PC-3 (cell line): ENCODE measurements at regions of chr11 and their contacts with region 1.

Region 1: DNA sequence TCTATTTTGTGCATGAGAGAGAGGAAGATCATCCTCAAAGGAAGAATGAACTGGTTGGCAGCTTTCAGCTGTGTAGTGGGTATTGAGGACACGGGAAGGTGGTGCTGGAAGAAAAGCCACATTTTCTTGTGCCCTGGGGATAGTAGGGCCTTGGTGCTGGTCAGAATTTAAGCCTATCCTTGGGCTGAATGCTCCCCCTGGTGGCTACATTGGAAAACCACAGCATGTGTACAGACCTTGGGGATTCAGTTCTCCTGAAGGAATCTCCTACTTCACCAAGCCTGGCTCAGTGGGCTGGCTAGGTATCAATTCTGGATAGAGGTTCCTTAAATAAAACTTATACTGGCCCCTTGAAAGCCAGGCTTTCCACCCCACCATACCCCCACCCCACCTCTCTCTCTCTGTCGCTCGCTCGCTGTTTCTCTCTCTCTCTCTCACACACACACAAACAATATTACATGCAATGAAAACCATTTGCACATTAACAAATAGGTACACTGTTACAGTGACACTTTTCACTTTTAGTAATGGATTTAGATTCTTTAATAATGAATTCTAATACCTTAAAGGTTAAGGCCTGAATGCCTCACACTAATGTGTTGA is 2.8 kb upstream of the OR51M1 start:
- DNase-seq: peak; percentile 65
- ATAC-seq: peak; percentile 89
- H3K4me3 ChIP-seq: no peak overlapping the region
- H3K27ac ChIP-seq: no peak overlapping the region
- H3K4me1 ChIP-seq: no peaks in the 10 kb centered on the region
- H3K27me3 ChIP-seq: no peaks in the 10 kb centered on the region
- CTCF ChIP-seq: peak; percentile 78

Region 2: DNA sequence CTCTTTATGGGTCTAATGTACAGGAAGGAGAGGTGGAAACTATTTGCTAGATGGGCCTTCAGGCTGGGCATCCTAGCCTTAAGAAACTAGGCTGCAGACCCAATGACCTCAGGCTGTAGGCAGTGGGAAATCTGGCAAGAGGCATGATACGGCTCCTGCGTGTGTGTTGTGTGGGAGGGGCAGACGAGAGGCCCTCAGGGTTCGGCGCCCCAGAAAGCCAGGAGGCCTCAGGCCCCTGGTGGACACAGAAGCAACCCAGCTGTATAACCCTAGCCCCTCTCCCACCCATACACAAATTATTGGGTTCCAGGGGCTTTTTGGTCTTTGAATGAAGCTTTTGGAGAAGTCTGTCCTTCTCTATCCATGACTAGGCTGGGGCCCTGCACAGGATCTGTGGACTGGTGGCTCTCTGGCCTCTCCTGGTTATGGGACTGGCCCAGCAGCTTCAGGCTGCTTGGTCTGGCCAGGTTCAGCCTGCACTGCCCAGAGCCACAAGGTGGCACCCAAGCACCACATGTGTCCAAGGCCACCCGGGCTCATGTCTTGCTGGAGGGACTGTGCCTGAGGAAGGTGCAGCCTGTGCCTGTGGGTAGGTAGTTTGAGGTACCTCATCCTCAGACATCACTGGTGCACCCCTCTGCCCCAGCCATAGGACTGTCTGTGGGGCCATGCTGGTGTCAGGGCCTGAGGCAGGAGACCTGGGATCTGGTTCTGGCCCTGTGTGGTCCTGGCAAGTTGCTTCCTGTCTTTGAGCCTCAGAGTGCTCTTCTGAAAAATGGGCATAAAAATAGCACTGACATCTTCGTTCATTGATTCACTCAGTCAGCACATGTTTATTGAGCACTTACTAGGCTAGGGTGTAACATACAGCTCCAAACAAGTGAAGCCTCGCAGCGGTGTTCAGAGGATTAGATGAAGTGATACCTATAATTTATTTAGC is 1198.8 kb before region 1 on chr11:
- CTCF ChIA-PET with region 1: no interaction called
- POLR2A ChIA-PET with region 1: no interaction called
- intact Hi-C with region 1: loop called (anchors 5 kb)
- DNase-seq: peak; percentile 74
- ATAC-seq: peak; percentile 95
- H3K4me3 ChIP-seq: no peak overlapping the region
- H3K27ac ChIP-seq: no peak overlapping the region
- H3K4me1 ChIP-seq: no peaks in the 10 kb centered on the region
- H3K27me3 ChIP-seq: no peaks in the 10 kb centered on the region
- CTCF ChIP-seq: peak; percentile 86

Region 3: DNA sequence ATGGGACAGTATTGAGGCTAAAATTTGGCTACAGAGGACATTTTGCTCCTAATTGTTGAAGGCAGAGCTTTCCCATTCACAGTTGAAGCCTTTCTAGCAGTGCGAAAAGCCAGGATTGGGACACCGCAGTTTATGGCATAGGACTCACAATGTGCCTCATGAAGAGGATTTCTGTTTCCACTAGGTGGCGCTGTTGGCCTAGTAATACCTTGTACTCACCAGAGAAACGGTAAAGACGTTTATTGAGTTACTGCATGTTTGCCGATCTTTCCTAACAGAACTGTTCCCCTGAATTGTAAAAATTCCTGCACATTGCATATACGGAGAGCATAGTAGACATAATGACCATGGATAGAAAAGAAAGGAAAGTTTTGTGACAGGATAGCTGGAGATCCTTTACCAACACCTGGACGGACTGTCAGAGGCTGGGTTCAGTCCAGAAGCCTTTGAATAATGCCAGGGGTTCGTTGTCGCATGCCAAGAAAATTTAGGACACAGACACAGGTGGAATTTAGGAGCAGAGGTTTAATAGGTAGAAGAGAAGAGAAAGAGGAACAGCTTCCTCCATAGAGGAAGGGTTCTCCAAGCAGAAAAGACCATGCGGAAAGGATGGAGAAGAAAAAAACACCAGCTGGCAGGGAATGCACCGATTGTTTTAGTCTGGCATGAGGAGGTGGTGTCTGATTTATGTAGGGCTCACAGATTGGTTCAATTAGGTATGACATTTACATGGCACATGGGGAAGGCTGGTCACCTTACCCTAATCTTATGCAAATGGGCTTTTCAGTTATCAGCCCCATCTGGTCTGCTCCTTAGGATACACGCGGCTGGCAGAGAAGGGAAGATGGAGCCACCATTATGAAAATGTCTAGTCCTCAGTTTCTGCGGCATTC is 754.4 kb before region 1 on chr11:
- CTCF ChIA-PET with region 1: no interaction called
- POLR2A ChIA-PET with region 1: no interaction called
- intact Hi-C with region 1: loop called (anchors 10 kb)
- DNase-seq: peak; percentile 84
- ATAC-seq: peak; percentile 85
- H3K4me3 ChIP-seq: no peak overlapping the region
- H3K27ac ChIP-seq: no peak overlapping the region
- H3K4me1 ChIP-seq: no peaks in the 10 kb centered on the region
- H3K27me3 ChIP-seq: peaks cover 21% of the 10 kb centered on the region
- CTCF ChIP-seq: peak; percentile 79

Region 4: DNA sequence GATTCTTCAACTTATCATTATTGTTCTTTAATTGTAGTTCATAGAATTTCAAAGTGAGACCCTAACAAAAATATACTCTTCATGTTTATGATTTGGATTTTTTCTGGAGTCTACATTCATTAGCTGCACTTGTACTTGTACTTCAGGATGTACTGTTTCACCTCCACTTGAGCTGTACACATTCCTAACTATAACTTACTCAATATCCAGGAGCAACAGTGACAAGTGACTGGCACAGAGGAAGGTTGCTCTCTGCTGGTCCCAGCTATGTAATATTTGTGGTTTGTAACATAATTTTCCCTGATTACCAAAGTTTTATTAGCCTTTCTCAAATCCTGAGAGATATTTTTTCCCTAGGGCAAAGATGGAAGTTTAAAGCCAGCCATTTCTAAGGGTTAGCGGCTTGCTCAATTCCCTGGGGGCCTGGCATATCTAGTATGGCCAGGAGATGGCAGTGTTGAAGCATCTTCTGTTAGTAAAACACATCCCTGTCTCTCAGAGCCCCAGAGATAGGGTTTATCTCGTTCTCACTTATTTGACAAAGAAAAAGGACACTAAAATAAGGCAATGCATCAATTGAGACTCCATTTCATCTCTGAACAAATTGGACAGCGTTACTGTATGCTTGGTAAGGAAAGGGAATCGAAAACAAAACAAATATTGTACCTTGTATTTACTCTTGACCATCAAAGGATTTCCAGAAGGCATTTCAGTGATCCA is 256.9 kb before region 1 on chr11:
- CTCF ChIA-PET with region 1: no interaction called
- POLR2A ChIA-PET with region 1: no interaction called
- intact Hi-C with region 1: loop called (anchors 1 kb)
- DNase-seq: peak; percentile 71
- ATAC-seq: peak; percentile 67
- H3K4me3 ChIP-seq: no peak overlapping the region
- H3K27ac ChIP-seq: no peak overlapping the region
- H3K4me1 ChIP-seq: no peaks in the 10 kb centered on the region
- H3K27me3 ChIP-seq: no peaks in the 10 kb centered on the region
- CTCF ChIP-seq: peak; percentile 81

Region 5: DNA sequence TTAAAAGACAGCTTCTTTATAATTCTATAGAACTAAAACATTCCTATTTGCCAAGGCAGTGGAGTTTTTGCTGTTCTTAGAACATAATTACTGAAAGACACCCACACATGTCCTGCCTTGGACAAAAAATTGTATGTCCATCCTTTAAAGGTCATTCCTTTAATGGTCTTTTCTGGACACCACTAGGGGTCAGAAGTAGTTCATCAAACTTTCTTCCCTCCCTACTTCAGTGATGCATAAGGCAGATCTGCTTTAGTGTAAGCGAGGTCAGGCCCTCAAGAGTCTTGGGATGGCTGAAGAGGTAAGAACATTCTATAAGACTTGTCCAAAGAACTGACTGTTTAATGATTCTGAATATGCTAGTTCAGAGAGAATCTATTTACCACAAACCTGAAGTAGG is 176.1 kb before region 1 on chr11:
- CTCF ChIA-PET with region 1: no interaction called
- POLR2A ChIA-PET with region 1: no interaction called
- intact Hi-C with region 1: loop called (anchors 1 kb)
- DNase-seq: peak; percentile 59
- ATAC-seq: peak; percentile 82
- H3K4me3 ChIP-seq: no peak overlapping the region
- H3K27ac ChIP-seq: no peak overlapping the region
- H3K4me1 ChIP-seq: no peaks in the 10 kb centered on the region
- H3K27me3 ChIP-seq: no peaks in the 10 kb centered on the region
- CTCF ChIP-seq: peak; percentile 62

Region 6: DNA sequence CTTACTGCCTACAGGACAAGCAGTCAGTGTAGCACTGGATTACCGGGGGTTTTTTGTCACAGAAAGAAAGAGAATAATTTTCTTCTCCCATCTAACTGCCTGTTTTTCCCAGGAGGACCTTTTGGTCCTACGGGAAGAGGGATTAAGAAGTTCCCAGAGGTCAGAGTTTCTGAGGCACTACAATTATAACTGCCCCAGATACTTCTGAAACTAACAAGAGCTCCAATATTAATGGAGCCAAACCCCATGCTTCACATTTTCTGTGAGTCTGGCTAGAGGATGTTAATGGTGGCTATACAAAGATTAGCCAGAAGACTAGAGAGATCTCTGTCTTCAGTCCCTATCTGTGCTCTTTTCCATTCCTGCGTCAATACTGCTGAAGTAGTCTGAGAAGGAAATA is 561.1 kb after region 1 on chr11 and contains the start of gene OR56A3:
- CTCF ChIA-PET with region 1: no interaction called
- POLR2A ChIA-PET with region 1: no interaction called
- intact Hi-C with region 1: no loop called
- DNase-seq: no peak
- ATAC-seq: no peak
- H3K4me3 ChIP-seq: no peak within 1 kb of the TSS
- H3K27ac ChIP-seq: no peak within 1 kb of the TSS
- H3K4me1 ChIP-seq: no peaks in the 10 kb centered on the region
- H3K27me3 ChIP-seq: 0 out of 2 replicates have a peak, but pooled peaks cover 5% of the 10 kb centered on the region
- CTCF ChIP-seq: no peak
- total RNA-seq, gene OR56A3: not detected in 2 replicates